ENCODE measurements at regions of chr18 and their contacts with region 1.

Region 1: DNA sequence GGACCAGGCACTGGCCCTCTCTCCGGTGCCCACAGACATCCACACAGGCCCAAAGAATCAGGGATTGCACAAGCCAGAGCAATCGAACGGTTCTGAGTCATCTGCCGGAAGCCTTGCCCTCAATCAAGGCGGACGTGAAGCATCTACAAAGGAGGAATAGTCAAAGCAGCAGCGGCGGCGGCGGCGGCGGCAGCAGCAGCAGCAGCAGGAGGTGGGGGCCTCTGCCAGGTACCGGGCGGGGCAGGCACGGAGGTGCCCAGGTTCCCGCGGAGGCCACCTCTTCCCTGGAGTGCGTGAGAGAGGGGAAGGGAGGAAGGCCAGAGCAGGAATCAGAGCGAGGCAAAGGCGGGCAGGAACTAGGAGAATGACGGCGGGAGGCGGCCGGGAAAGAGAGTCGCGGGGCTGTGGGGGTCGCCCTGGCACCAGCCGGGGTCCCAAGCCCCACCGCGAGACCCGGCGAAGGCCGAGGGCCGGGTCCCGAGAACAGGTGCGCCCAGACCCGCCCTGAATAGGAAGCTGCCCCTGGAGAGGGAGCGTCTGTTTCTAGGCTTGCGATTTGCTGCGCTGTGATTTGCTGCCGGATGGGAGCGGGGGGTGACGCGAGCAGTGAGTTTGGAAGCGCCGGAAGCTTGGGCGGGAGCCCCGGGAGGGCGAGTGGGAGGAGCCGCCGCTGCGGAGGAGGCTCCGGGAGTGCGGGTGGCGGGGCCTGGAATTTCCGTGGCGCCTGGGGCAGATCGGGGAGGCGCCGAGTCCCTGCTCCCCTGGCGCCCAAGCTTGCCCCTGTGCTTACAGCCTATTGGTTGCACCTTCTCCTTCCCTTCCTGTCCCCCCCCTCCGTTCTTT is at the start of gene SERPINB8:
- DNase-seq: peak; percentile 44 to 84 (median 77)
- ATAC-seq: peak; percentile 89
- H3K4me3 ChIP-seq: peak within 1 kb of the TSS; percentile 93
- H3K4me3 Mint-ChIP-seq: peak within 1 kb of the TSS; percentile 88 to 98 (median 94)
- H3K27ac ChIP-seq: peak within 1 kb of the TSS; percentile 96
- H3K27ac Mint-ChIP-seq: peak within 1 kb of the TSS; percentile 92 to 97 (median 94)
- H3K4me1 ChIP-seq: peaks cover 13% of the 10 kb centered on the region in 2 donors
- H3K4me1 Mint-ChIP-seq: peaks cover 26 to 42% (median 31%) of the 10 kb centered on the region in 7 donors
- H3K27me3 ChIP-seq: no peaks in the 10 kb centered on the region
- H3K27me3 Mint-ChIP-seq: peaks cover 0 to 25% (median 1%) of the 10 kb centered on the region in 5 donors
- total RNA-seq, gene SERPINB8: 9.2 to 15.7 (median 10.0) TPM

Region 2: DNA sequence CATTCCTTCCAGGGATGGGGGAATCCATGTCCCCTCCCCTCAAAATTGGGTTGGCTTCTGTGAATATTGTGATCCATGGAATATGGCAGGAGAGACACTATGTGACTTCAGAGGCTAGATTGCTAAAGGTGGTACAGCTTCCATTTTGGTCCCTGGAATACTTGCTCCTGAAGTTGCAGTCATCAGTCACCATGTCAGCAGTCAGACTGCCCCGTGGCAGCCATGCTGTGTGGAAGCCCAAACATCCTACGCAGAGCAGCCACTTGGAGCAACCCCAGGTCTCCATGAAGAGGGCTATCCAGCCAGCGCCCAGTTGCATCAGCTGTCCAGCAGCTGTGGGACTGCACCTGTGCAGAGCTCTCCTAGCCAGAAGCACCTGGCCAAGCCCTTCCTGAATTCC is 587.3 kb before region 1 on chr18:
- CTCF ChIA-PET with region 1: no interaction called
- POLR2A ChIA-PET with region 1: no interaction called
- intact Hi-C with region 1: no loop called
- DNase-seq: no peak
- ATAC-seq: no peak
- H3K4me3 ChIP-seq: no peak overlapping the region
- H3K4me3 Mint-ChIP-seq: no peak overlapping the region
- H3K27ac ChIP-seq: no peak overlapping the region
- H3K27ac Mint-ChIP-seq: no peak overlapping the region
- H3K4me1 ChIP-seq: peaks cover 0 to 7% of the 10 kb centered on the region in 2 donors
- H3K4me1 Mint-ChIP-seq: peaks cover 10 to 17% (median 14%) of the 10 kb centered on the region in 7 donors
- H3K27me3 ChIP-seq: no peaks in the 10 kb centered on the region
- H3K27me3 Mint-ChIP-seq: no peaks in the 10 kb centered on the region

Region 3: DNA sequence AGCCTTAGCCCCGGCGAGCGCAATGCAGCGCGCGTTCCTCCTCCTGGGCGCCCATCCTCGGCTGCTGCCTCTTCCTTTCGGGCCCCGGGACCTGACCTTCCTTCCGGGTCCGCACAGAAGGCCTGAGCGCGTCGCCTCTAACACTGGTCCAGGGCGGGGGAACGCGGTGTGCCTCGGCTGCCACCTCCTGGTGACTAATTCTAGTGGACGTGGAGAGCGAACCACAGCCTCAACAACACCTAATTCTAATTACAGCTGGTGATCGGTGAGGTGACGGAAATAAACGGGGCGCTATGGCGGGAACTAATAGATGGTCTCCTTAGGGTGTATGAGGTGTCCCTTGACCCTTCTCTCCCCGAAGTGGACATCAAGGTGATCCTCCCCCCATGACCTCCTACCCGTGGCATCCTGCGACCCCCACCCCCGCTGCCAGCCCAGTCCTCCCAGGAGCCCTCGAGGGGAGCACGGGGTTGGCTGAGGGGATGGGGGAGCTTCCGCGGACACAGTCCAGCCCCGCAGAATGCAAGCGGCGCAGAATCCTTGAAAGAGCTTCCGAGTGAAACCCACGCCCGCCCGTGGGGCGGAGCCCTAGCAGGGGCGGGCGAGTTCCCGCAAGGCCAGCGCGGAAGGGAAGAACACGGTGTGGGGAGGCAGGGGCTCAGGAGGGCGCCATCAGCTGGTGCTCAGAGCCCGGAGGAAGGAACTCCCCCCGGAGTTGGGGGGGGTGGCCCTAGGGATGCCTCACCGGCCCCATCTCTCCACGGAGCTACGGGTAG is 33.8 kb before region 1 on chr18:
- CTCF ChIA-PET with region 1: no interaction called
- POLR2A ChIA-PET with region 1: no interaction called
- intact Hi-C with region 1: loop called in 1 of 2 experiments (anchors 1 kb)
- DNase-seq: peak in 8 of 9 donors; percentile 6 to 69 (median 19)
- ATAC-seq: peak; percentile 93
- H3K4me3 ChIP-seq: peak overlapping the region; percentile 58
- H3K4me3 Mint-ChIP-seq: peak overlapping the region in 8 of 10 donors; percentile 39 to 86 (median 64)
- H3K27ac ChIP-seq: no peak overlapping the region
- H3K27ac Mint-ChIP-seq: peak overlapping the region in 1 of 9 donors; percentile 54
- H3K4me1 ChIP-seq: peaks cover 0 to 5% of the 10 kb centered on the region in 2 donors
- H3K4me1 Mint-ChIP-seq: peaks cover 0 to 4% (median 3%) of the 10 kb centered on the region in 7 donors
- H3K27me3 ChIP-seq: peaks cover 0 to 8% of the 10 kb centered on the region in 2 donors
- H3K27me3 Mint-ChIP-seq: peaks cover 7 to 38% (median 24%) of the 10 kb centered on the region in 5 donors

Region 4: DNA sequence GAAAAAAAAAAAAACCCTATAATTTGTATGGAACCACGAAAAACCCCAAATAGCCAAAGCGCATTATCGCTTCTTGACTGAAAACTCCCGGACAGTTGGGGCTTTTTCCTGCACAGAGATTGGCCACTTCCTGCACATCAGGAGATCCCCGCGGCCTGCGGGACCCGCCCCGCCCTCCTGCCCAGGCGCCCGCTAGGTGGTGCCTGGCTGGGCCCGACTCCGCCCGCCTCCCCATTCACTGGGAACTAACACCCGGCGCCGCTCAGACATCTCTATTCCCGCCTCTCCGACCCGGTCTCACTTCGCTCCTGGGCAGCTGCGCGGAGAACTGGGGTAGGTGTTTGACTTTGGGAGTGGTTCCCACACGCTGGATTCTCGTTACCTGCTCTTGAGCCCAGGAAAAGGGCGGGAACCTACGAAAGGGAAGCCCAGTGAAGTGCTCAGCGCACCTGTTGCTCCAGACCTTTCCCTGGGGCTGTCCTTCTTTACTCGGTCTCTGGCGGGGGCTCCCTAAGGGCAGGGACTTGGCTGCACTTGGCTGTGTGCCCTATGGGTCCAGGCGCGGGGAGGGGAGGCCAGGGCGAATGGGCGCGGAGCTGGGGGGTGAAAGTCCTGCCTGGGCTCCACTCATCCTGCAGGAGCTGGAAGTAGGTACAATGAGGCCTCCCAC is 21.0 kb before region 1 on chr18 and contains the start of gene HMSD:
- CTCF ChIA-PET with region 1: no interaction called
- POLR2A ChIA-PET with region 1: no interaction called
- intact Hi-C with region 1: loop called in 1 of 2 experiments (anchors 1 kb)
- DNase-seq: peak in 3 of 9 donors; percentile 17 to 81 (median 29)
- ATAC-seq: peak; percentile 89
- H3K4me3 ChIP-seq: peak within 1 kb of the TSS; percentile 39
- H3K4me3 Mint-ChIP-seq: peak within 1 kb of the TSS in 7 of 10 donors; percentile 26 to 84 (median 49)
- H3K27ac ChIP-seq: no peak within 1 kb of the TSS
- H3K27ac Mint-ChIP-seq: peak within 1 kb of the TSS in 1 of 9 donors; percentile 70
- H3K4me1 ChIP-seq: peaks cover 0 to 6% of the 10 kb centered on the region in 2 donors
- H3K4me1 Mint-ChIP-seq: peaks cover 0 to 34% (median 11%) of the 10 kb centered on the region in 7 donors
- H3K27me3 ChIP-seq: no peaks in the 10 kb centered on the region
- H3K27me3 Mint-ChIP-seq: peaks cover 25 to 49% (median 48%) of the 10 kb centered on the region in 5 donors
- total RNA-seq, gene HMSD: 5.1 TPM in 1 of 5 experiments, not detected in the others